SK-N-SH (cell line): ENCODE measurements at regions of chr14 and their contacts with region 1.

Region 1: DNA sequence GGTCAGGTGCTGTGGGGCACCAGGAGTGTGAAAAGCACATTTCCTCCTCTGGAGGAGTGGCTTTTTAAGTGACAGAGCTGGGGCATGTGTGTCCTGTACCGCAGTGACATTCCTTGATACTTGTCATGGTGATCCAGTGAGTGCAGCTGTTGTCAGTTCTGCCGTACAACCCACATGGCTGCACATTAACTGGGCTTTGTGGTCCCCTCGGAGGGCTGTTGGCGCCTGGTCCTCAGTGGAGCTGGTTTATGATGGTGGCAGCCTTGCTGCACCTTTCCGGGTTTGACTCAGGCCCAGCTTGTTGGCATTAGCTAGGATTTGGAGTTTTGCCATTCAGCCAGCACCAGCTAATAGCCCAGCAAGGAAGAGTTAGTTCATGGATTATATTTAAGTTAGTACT is 77.0 kb downstream of the SLC25A47 start:
- DNase-seq: peak; percentile 53
- H3K4me3 ChIP-seq: no peak overlapping the region
- H3K27ac ChIP-seq: peak overlapping the region; percentile 10 to 100; a peak in 3 of 4 replicates
- H3K4me1 ChIP-seq: peaks cover 5 to 75% of the 10 kb centered on the region in 2 experiments; a peak in 2 of 4 replicates
- H3K27me3 ChIP-seq: no peaks in the 10 kb centered on the region
- CTCF ChIP-seq: no peak
- EP300 ChIP-seq: 0 out of 4 replicates have a peak, but pooled peaks of 1 of the 2 experiments have one; percentile 4
- RAD21 ChIP-seq: no peak

Region 2: GRCh38 chr14:100422556-100423404 is 22.7 kb after region 1 on chr14:
- CTCF ChIA-PET with region 1: interaction called, 310 read pairs
- POLR2A ChIA-PET with region 1: interaction called, 11 read pairs
- DNase-seq: no peak
- H3K4me3 ChIP-seq: no peak overlapping the region
- H3K27ac ChIP-seq: peak overlapping the region; percentile 82 to 100
- H3K4me1 ChIP-seq: peaks cover 26 to 81% of the 10 kb centered on the region in 2 experiments
- H3K27me3 ChIP-seq: no peaks in the 10 kb centered on the region
- CTCF ChIP-seq: no peak
- EP300 ChIP-seq: peak in 1 of 2 experiments; percentile 45; a peak in 1 of 4 replicates
- RAD21 ChIP-seq: no peak